HAP-1 (cell line): ENCODE measurements at regions of chr15 and their contacts with region 1.

Region 1: DNA sequence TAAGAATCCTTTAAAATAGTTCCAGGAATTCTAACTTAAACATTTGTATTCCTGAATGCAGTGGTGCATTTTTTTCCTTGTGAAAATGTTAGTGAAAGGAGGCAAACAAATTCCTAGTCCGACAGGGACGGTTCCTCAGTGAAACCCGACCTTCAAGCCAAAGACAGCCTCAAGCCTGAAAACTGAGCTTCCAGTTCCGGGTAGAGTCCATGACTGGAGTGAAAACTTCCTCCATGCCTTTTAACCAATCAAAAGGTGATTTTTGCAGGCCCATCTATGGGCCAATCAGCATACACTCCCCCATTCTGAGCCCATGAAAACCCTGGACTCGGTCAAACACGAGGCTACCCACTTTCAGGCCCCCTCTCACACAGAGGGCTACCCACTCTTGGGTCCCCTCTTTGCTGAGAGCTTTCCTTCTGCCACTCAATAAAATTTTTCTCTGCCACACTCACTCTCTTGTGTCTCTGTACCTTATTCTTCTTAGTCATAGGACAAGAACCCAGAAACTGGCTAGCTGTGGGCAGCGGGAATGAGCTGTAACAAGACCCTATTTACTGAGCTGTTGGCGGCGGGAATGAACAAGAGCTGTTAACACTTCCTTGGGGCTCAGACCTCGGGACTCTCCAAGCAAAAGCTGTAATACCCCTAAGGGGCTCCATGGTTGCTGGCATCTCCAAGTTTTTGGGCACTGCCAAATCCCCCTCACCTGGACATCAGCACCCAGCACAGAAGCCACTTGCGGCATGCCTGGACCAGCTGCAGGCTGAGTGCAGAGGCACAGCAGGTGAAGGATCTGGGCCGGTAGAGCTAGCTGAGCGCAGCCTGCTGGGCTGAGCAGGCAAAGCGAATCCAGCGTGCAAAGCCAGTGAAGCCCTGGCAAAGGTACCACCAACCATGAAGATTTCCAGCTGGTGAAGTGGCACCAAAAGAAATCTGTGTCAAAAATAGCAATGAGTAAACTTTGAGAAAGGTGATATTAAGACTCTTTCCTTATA is 598.8 kb downstream of the MCTP2 start:
- DNase-seq: no peak
- H3K4me3 ChIP-seq: no peak overlapping the region
- H3K4me1 ChIP-seq: no peaks in the 10 kb centered on the region
- H3K27me3 ChIP-seq: no peaks in the 10 kb centered on the region

Region 2: GRCh38 chr15:93982226-93982727 is 847.9 kb before region 1 on chr15:
- in situ Hi-C with region 1: no loop called
- DNase-seq: no peak
- H3K4me3 ChIP-seq: no peak overlapping the region
- H3K4me1 ChIP-seq: no peaks in the 10 kb centered on the region
- H3K27me3 ChIP-seq: no peaks in the 10 kb centered on the region

Region 3: DNA sequence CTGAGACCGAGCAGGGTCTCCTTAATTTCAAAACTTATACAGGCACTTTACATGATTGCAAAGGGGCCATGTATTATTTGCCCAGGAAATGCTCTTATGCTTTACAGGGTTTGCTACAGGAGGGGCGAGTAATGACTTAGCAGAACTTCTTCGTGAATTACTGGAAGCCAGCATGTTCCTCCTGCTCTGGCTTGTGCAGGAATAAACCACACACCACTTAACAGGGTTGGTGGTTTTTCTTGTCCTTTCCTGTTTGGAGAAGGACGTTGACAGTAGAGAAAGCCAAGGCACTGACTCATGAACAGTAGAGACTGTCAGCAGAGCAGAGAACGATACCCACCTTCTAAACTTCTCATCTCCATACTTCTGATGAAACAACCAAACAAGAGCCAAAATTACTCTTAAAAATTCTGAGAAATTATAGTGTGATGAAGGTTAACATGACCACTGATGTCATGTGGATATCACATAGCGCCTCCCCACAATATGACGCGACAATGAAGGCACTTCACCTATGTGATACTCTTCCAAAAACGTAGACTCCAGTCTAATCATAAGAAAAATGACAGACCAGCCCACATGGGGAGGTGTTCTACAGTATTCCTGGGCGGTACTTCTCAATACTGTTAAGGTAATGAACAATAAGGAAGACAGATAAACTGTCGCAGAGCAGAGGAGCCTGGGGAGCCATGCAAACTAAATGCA is 623.6 kb before region 1 on chr15:
- in situ Hi-C with region 1: no loop called
- DNase-seq: no peak
- H3K4me3 ChIP-seq: no peak overlapping the region
- H3K4me1 ChIP-seq: no peaks in the 10 kb centered on the region
- H3K27me3 ChIP-seq: no peaks in the 10 kb centered on the region

Region 4: DNA sequence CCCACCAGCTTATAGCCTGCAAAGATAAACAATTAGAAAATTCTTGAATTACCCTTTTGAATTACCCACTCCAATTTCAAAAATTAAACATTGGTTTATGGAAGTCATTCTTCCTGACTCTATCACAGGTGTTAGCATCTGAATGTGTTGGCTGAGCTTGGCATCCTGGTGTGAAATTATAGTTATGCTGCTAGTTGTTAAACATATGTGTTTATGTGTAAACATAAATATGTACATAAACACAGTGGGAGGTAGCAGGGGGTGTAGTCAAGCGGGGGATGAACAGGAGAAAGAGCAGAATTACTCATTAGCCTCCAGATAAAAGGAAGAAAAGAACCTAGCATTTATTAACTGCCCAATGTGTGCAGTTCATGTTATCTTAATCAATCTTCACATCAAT is 68.6 kb before region 1 on chr15:
- in situ Hi-C with region 1: loop called (anchors 10 kb)
- DNase-seq: no peak
- H3K4me3 ChIP-seq: no peak overlapping the region
- H3K4me1 ChIP-seq: no peaks in the 10 kb centered on the region
- H3K27me3 ChIP-seq: no peaks in the 10 kb centered on the region

Region 5: GRCh38 chr15:95620934-95621579 is 790.9 kb after region 1 on chr15:
- in situ Hi-C with region 1: no loop called
- DNase-seq: no peak
- H3K4me3 ChIP-seq: no peak overlapping the region
- H3K4me1 ChIP-seq: no peaks in the 10 kb centered on the region
- H3K27me3 ChIP-seq: no peaks in the 10 kb centered on the region